ENCODE measurements at regions of chr1 and their contacts with region 1.

Region 1: DNA sequence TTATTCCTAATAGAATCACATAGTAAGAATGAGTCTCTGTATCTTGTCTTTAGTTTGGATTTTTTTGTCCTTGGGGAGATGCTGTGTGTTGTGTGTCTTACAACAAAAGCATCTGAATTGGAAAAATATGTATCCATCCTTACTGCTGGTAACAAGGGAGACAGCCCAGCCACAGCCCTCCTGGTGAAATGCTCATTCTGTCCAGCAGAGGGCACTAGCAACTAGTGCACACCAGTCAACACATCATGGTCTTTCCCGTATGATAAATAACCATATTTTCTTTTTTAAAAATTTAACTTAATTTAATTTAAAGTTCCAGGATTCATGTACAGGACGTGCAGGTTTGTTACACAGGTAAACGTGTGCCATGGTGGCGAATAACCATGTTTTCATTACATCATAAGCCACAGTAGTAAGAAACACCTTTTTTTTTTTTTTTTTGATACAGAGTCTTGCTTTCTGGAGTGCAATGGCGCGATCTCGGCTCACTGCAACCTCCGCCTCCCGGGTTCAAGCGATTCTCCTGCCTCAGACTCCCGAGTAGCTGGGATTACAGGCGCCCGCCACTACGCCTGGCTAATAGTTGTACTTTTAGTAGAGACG is 245.1 kb downstream of the PTBP2 start:
- DNase-seq: no peak
- H3K4me3 ChIP-seq: no peak overlapping the region
- H3K27ac ChIP-seq: no peak overlapping the region
- H3K4me1 ChIP-seq: peaks cover 0 to 35% (median 32%) of the 10 kb centered on the region in 4 donors
- H3K27me3 ChIP-seq: no peaks in the 10 kb centered on the region
- CTCF ChIP-seq: peak; percentile 85 to 96 (median 90)
- EP300 ChIP-seq: no peak
- POLR2A ChIP-seq: no peak

Region 2: GRCh38 chr1:96236156-96236739 is 730.4 kb before region 1 on chr1:
- intact Hi-C with region 1: loop called (anchors 10 kb)
- DNase-seq: no peak
- H3K4me3 ChIP-seq: no peak overlapping the region
- H3K27ac ChIP-seq: peak overlapping the region in 1 of 4 donors; percentile 39
- H3K4me1 ChIP-seq: peaks cover 0 to 30% (median 22%) of the 10 kb centered on the region in 4 donors
- H3K27me3 ChIP-seq: no peaks in the 10 kb centered on the region
- CTCF ChIP-seq: peak; percentile 48 to 68 (median 63)
- EP300 ChIP-seq: no peak
- POLR2A ChIP-seq: no peak

Region 3: GRCh38 chr1:97034651-97035050 is 68.0 kb after region 1 on chr1:
- intact Hi-C with region 1: no loop called
- DNase-seq: no peak
- H3K4me3 ChIP-seq: no peak overlapping the region
- H3K27ac ChIP-seq: no peak overlapping the region
- H3K4me1 ChIP-seq: no peaks in the 10 kb centered on the region
- H3K27me3 ChIP-seq: no peaks in the 10 kb centered on the region
- CTCF ChIP-seq: no peak
- EP300 ChIP-seq: no peak
- POLR2A ChIP-seq: no peak

Region 4: GRCh38 chr1:98048244-98048643 is 1081.6 kb after region 1 on chr1:
- intact Hi-C with region 1: loop called (anchors 5 kb)
- DNase-seq: no peak
- H3K4me3 ChIP-seq: peak overlapping the region in 3 of 4 donors; percentile 17 to 37 (median 21)
- H3K27ac ChIP-seq: no peak overlapping the region
- H3K4me1 ChIP-seq: peaks cover 21 to 36% (median 28%) of the 10 kb centered on the region in 4 donors
- H3K27me3 ChIP-seq: peaks cover 4 to 92% (median 47%) of the 10 kb centered on the region in 4 donors
- CTCF ChIP-seq: peak in 1 of 3 experiments; percentile 9
- EP300 ChIP-seq: no peak
- POLR2A ChIP-seq: no peak